ENCODE measurements at regions of chr3 and their contacts with region 1.

Region 1: GRCh38 chr3:182713743-182714517 is 79.4 kb upstream of the ATP11B start:
- DNase-seq: peak in 2 of 4 experiments; percentile 62 to 81
- ATAC-seq: peak; percentile 68
- H3K4me3 ChIP-seq: no peak overlapping the region
- H3K27ac ChIP-seq: peak overlapping the region; percentile 47; the same call in 1 of the 3 replicates
- H3K4me1 ChIP-seq: peaks cover 3 to 35% of the 10 kb centered on the region in 2 experiments
- H3K27me3 ChIP-seq: no peaks in the 10 kb centered on the region
- CTCF ChIP-seq: peak; percentile 61 to 88 (median 63); a peak in 5 of 6 replicates
- EP300 ChIP-seq: 0 out of 2 replicates have a peak, but pooled peaks have one; percentile 1
- POLR2A ChIP-seq: no peak
- RAD21 ChIP-seq: peak; percentile 88 to 91

Region 2: GRCh38 chr3:182792901-182793662 is 79.2 kb after region 1 on chr3 and contains the start of gene ATP11B:
- CTCF ChIA-PET with region 1: no interaction called
- POLR2A ChIA-PET with region 1: interaction called, 3 read pairs
- in situ Hi-C with region 1: loop called (anchors 5 kb)
- intact Hi-C with region 1: loop called (anchors 1 kb)
- DNase-seq: peak; percentile 92 to 96 (median 96)
- ATAC-seq: peak; percentile 83
- H3K4me3 ChIP-seq: peak within 1 kb of the TSS; percentile 82
- H3K27ac ChIP-seq: peak within 1 kb of the TSS; percentile 97
- H3K4me1 ChIP-seq: peaks cover 7 to 16% of the 10 kb centered on the region in 2 experiments; a peak in 3 of 5 replicates
- H3K27me3 ChIP-seq: no peaks in the 10 kb centered on the region
- CTCF ChIP-seq: no peak
- EP300 ChIP-seq: no peak
- POLR2A ChIP-seq: peak; percentile 91
- RAD21 ChIP-seq: 0 out of 4 replicates have a peak, but pooled peaks of 1 of the 2 experiments have one; percentile 6
- polyA plus RNA-seq, gene ATP11B: 11.9 to 12.1 TPM

Region 3: DNA sequence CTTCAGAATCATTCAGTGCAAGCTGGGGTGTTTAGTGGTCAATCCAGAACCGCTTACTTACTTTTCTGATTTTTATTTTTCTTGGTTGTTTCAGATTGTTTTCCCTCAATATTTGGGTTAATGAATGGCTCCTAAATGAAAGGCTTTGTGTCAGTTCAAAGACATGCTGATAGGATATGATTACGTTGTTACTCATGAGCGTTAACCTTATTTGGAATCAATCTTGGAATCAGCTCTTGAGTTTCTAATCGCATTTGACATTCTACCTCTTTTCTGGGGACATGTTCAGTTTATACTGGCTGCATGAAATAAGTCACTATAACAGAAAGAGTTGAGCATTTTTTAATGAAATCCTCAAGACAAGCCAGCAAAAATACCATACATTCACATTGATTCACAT is 129.5 kb after region 1 on chr3:
- CTCF ChIA-PET with region 1: interaction called, 20 read pairs
- POLR2A ChIA-PET with region 1: no interaction called
- in situ Hi-C with region 1: loop called (anchors 5 kb)
- intact Hi-C with region 1: loop called (anchors 1 kb)
- DNase-seq: no peak
- ATAC-seq: no peak
- H3K4me3 ChIP-seq: no peak overlapping the region
- H3K27ac ChIP-seq: no peak overlapping the region
- H3K4me1 ChIP-seq: no peaks in the 10 kb centered on the region
- H3K27me3 ChIP-seq: no peaks in the 10 kb centered on the region
- CTCF ChIP-seq: no peak
- EP300 ChIP-seq: no peak
- POLR2A ChIP-seq: no peak
- RAD21 ChIP-seq: no peak

Region 4: DNA sequence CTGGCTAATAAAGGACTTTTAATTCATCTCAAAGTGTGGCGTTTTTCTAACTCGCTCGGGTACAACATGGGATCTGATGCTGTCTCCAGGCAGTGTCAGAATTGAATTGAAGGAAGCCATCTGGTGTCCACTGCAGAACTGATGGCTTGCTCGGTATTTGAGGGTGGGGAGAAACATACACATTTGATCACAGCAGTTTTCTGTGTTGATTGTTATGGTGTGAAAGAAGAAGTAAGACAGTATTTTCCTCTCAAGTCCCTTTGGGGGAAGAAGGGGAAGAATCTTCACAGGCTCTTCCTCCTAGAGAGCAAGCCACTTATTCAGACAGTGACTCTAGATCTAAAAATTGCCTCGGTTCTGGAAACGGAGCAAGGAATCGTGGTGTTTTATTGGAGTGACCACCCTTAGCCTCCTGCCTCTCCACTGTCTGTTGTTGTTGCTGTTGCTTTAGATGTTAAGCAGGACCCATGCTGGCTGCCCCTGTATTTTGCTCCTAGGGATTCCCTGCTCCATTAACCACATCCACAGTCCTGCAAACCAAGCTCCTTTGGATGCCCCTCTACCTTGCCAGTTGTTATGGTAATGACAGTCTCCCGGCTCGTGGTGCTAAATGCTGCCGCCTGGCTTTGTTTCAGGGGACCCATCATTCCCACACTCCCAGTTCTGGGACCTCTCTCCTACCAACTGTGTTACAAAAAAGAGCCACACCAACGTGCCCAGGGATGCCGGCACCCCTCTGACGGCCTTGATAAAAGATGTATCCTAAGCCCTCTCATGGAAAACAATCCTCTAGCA is 400.7 kb after region 1 on chr3:
- CTCF ChIA-PET with region 1: no interaction called
- POLR2A ChIA-PET with region 1: no interaction called
- in situ Hi-C with region 1: no loop called
- intact Hi-C with region 1: loop called (anchors 2 kb)
- DNase-seq: no peak
- ATAC-seq: peak; percentile 57
- H3K4me3 ChIP-seq: no peak overlapping the region
- H3K27ac ChIP-seq: no peak overlapping the region
- H3K4me1 ChIP-seq: peaks cover 0 to 8% of the 10 kb centered on the region in 2 experiments; a peak in 4 of 5 replicates
- H3K27me3 ChIP-seq: peaks cover 10 to 25% of the 10 kb centered on the region in 2 experiments
- CTCF ChIP-seq: no peak
- EP300 ChIP-seq: no peak
- POLR2A ChIP-seq: no peak
- RAD21 ChIP-seq: 0 out of 4 replicates have a peak, but pooled peaks of 1 of the 2 experiments have one; percentile 18

Region 5: GRCh38 chr3:183377307-183377959 is 663.5 kb after region 1 on chr3:
- CTCF ChIA-PET with region 1: interaction called, 9 read pairs
- POLR2A ChIA-PET with region 1: no interaction called
- in situ Hi-C with region 1: no loop called
- intact Hi-C with region 1: loop called (anchors 5 kb)
- DNase-seq: no peak
- ATAC-seq: no peak
- H3K4me3 ChIP-seq: no peak overlapping the region
- H3K27ac ChIP-seq: no peak overlapping the region
- H3K4me1 ChIP-seq: peaks cover 4 to 14% of the 10 kb centered on the region in 2 experiments
- H3K27me3 ChIP-seq: no peaks in the 10 kb centered on the region
- CTCF ChIP-seq: no peak
- EP300 ChIP-seq: no peak
- POLR2A ChIP-seq: no peak
- RAD21 ChIP-seq: no peak

Measured in K562 (cell line).